ENCODE measurements at regions of chr22 and their contacts with region 1.

Region 1: DNA sequence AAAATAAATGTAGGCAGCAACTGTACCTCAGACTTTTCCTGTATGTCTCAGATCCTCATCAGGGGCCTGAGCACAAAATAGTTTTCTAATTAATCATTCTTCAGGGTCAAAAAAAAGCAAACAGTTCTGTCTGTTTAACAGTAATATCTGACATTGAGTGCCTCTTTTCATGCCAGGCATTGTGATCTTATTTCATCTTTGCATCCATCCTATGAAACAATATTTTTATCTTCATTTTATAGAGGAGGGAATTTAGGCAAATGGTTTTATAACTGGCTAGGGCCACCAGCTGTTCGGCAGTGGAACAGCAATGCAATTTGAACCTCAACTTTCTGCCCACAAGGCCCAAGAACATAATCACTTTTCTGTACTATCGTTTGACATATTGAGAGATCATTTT is 145.6 kb downstream of the WNT7B start:
- DNase-seq: no peak
- H3K4me3 ChIP-seq: no peak overlapping the region
- H3K27ac ChIP-seq: no peak overlapping the region
- H3K4me1 ChIP-seq: no peaks in the 10 kb centered on the region
- H3K27me3 ChIP-seq: no peaks in the 10 kb centered on the region
- CTCF ChIP-seq: peak; percentile 31 to 47 (median 34)
- EP300 ChIP-seq: no peak
- POLR2A ChIP-seq: no peak

Region 2: DNA sequence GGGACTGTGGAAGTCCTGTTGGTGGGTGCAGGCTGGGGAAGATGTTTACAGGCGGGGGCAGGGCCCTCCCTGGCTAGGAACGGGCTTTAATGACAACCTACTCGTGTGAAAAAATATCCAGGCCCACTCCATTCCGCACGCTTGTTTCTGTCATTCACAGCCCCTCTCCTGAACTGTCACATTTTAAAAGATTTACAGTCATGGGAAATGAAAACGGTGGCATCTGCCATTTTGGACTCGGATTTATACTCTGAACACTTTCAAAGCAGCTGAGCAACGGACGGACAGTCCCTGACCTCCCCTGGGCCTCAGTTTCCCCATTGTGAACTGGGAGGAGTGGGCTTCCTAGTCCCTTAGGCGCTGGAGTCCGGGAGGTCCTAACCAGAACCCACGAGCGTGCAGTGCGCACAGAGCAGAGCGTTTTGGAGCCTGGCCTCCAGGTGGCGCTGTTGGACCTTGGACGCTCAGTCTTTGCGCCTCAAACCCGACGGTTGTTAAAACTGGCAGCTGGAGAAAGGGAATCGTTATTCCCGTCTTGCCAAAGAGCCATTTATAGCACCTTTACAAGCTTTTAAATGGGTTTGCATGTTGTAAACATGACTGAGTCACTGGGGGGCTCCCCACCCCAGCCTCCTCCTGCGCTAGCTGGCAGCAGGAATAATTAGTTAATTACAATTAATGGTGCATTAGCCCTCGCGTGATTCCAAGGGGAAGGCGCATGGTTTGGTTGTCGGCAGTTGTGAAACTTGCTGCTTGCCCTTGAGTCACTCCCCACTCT is 253.5 kb before region 1 on chr22:
- intact Hi-C with region 1: loop called (anchors 10 kb)
- DNase-seq: peak; percentile 95
- H3K4me3 ChIP-seq: no peak overlapping the region
- H3K27ac ChIP-seq: no peak overlapping the region
- H3K4me1 ChIP-seq: peaks cover 0 to 31% (median 18%) of the 10 kb centered on the region in 4 donors
- H3K27me3 ChIP-seq: peaks cover 0 to 44% (median 0%) of the 10 kb centered on the region in 4 donors
- CTCF ChIP-seq: peak; percentile 80 to 96 (median 87)
- EP300 ChIP-seq: no peak
- POLR2A ChIP-seq: no peak

Region 3: DNA sequence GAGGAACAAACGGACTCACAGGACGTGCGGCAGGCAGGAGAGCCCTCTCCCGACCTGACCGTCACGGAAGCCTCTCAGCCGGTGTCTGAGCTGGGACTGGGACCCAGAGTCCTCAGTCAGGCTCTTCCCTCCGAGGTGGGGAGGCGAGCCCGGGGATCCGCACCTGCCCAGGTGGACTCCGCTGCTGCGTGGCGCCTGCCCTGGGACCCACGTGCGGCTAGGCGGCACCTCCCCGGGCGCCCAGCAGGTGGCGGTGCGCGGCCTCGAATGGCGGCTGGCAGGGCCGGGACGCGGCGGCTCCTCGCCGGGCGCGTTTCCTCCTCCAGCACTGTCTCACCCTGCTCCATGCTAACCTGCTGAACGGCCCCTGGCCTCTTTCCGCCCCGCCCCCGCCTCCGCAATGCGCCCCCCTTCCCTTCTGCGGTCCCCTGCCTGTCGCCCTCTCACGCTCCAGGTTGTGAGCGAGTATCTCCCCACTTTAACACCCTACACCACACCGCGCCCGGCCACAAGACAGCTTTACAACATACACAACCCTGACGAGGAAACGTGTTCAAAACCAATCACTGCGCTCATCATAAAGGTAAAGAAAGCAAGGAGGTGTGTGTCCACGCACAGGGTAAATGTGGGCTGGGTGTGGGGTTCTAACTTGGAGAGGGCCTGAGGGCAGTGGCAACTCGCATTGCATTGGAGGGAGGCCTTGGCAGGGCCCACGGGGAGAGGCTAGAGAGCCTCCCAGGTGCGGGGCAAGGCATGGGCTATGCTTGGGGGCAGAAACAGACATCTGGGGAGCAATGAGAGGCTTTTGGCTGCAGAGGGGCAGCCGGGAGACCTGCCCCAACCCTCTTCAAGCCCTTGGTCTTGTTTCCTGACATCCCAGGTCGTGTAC is 185.6 kb before region 1 on chr22:
- intact Hi-C with region 1: loop called (anchors 10 kb)
- DNase-seq: no peak
- H3K4me3 ChIP-seq: peak overlapping the region in 2 of 4 donors; percentile 5 to 27
- H3K27ac ChIP-seq: no peak overlapping the region
- H3K4me1 ChIP-seq: peaks cover 9 to 11% (median 10%) of the 10 kb centered on the region in 4 donors
- H3K27me3 ChIP-seq: peaks cover 0 to 67% (median 8%) of the 10 kb centered on the region in 4 donors
- CTCF ChIP-seq: peak; percentile 94 to 99 (median 97)
- EP300 ChIP-seq: no peak
- POLR2A ChIP-seq: no peak

Region 4: DNA sequence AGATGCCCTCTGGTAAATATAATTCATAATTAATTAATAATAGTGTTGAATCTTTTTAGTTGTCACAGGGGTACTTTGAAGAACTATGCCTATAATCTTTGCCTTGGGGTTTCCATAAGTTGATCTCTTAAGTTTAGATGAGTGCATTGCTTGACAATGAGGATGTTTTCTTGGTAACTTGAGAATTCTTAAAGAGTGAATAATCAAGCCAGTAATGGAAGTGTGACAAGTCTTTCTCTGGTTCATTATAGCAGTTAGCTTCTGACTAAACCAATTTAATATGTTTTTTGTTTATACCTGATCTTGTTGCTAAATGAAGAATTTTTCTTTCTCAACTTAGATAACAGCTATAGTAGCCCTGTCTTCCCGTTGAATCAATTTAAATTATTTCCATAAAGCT is 113.6 kb before region 1 on chr22:
- intact Hi-C with region 1: no loop called
- DNase-seq: no peak
- H3K4me3 ChIP-seq: no peak overlapping the region
- H3K27ac ChIP-seq: no peak overlapping the region
- H3K4me1 ChIP-seq: peaks cover 0 to 9% (median 0%) of the 10 kb centered on the region in 4 donors
- H3K27me3 ChIP-seq: no peaks in the 10 kb centered on the region
- CTCF ChIP-seq: no peak
- EP300 ChIP-seq: no peak
- POLR2A ChIP-seq: no peak